ENCODE measurements at regions of chr1 and their contacts with region 1.

Region 1: DNA sequence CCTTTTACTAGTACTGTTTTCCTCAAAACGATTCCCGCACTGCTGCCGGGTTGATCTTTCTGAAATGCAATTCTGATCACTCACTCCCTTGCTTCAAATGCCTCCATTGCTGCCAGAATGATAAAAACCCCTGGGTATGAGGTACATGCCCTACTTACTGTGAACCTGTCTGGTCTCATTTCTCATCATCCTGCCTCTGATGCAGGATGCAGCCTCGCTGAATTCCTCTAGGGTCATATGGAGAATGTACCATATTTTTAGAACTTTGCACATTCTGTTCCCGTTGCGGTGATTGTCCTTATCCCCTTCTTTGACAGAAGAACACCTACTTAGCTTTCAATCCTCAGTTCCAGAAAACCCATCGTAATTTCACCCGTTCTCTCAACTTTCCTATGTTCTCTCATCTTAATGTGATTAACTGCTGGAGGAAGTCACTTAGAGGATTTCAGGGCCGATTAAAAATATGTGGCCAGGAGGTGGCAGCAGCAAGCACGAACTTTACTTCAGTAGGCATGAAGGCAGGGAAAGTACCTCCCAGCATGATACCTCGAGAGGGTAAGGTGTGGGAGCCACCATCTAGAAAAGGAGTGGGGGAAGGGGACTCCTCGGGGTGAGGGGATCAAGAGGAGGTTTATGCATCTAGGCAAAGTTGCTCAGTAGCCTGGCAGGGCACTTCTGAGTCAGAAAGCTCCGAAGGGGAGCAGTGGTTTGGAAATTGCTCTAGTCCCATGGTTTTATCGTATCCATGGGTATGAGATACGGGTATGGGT is 361.5 kb upstream of the ZP4 start:
- DNase-seq: peak; percentile 57
- H3K4me3 Mint-ChIP-seq: no peak overlapping the region
- H3K27ac Mint-ChIP-seq: no peak overlapping the region
- H3K4me1 Mint-ChIP-seq: no peaks in the 10 kb centered on the region
- H3K27me3 Mint-ChIP-seq: no peaks in the 10 kb centered on the region

Region 2: DNA sequence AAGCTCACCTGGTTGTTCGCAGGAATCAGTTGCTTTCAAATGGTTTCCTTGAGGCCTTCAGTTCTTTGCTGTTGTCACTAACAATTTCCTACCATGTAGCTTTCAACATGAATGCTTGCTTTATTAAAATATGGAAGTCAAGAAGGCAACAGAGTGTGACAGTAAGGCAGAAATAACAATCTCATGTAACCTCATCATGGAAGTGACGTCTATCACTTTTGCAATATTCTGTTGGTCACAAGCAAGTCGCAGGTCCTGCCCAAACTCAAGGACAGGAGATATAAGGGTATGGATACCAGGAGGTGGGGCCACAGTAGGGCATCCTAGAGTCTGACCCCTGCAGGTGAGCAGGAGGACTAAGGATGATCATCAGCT is 64.7 kb before region 1 on chr1:
- CTCF ChIA-PET with region 1: no interaction called
- intact Hi-C with region 1: no loop called
- DNase-seq: no peak
- H3K4me3 Mint-ChIP-seq: no peak overlapping the region
- H3K27ac Mint-ChIP-seq: no peak overlapping the region
- H3K4me1 Mint-ChIP-seq: no peaks in the 10 kb centered on the region
- H3K27me3 Mint-ChIP-seq: no peaks in the 10 kb centered on the region

Region 3: DNA sequence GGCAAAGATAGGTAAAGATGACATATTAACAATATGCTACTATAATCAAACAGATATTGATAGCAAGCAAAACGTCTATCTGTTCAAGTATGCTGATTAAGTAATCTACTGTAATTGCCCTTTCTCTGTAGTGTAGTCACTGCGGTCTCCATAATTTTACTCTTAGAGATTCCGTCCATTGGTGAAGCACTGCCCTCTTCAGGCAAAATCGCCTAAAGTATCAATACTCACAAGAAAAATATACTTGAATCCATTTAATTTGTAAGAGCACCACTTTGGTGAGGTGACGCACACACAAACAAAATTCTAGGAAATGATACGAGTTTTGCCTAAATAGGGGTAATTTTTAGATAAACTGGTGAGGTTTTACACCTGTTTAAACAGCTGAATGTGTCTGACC is 699.6 kb after region 1 on chr1:
- CTCF ChIA-PET with region 1: no interaction called
- intact Hi-C with region 1: loop called (anchors 1 kb)
- DNase-seq: peak; percentile 25
- H3K4me3 Mint-ChIP-seq: no peak overlapping the region
- H3K27ac Mint-ChIP-seq: no peak overlapping the region
- H3K4me1 Mint-ChIP-seq: no peaks in the 10 kb centered on the region
- H3K27me3 Mint-ChIP-seq: no peaks in the 10 kb centered on the region

Measured in activated naive CD4-positive, alpha-beta T cell treated with anti-CD3 and anti-CD28 coated beads for 36 hours (primary cell).